ENCODE measurements at regions of chr22 and their contacts with region 1.

Region 1: GRCh38 chr22:40684728-40685127 is 5.4 kb downstream of the MCHR1 start:
- DNase-seq: no peak

Region 2: DNA sequence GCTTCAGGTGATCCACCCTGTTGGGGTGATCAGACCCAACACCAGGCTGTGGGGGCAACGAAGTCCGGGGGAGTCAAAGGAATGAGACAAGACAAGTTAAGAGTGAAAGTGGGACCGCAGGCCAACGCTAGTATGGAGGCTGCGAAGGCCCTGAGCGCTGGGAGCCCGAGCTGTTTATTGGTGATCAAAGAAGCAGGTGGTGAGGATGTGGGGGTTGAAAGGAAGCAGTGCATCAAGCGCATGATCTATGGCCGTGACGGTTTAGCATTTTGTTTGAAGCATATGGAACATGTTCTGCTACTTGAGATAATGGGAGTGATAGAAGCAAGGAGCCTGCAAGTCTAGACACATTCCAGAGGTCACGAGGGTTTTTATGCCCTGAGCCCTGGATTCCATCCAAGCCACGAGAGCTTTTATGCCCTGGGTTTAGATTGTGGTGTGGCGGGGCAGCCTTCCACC is 44.0 kb after region 1 on chr22:
- intact Hi-C with region 1: no loop called
- DNase-seq: no peak

Region 3: GRCh38 chr22:40764763-40765441 is 80.2 kb after region 1 on chr22:
- intact Hi-C with region 1: loop called (anchors 2 kb)
- DNase-seq: no peak